Thyroid gland (tissue), 4 donors: ENCODE measurements at regions of chr15 and their contacts with region 1.

Region 1: DNA sequence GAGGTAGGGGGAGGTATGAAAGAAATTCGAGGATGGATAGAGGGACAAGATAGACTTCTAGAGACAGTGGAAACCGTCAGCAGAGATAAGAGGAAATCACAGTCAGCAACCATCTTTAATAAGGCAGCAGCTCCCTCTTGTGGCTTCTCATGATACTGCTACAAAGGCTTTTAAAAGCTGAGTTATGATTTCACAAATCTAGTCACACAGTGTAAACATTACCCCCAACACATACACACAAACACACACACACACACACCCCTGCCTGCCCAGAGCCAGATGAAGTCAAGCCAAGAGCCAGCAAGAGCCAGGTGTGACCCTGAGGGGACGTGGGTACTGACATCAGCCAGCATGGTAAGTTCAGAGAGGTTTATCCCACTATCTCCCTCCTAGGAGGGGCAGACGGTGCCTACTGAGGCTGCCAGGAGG is 18.9 kb upstream of the TGM5 start:
- DNase-seq: peak; percentile 14 to 29
- H3K4me3 ChIP-seq: no peak overlapping the region
- H3K27ac ChIP-seq: no peak overlapping the region
- H3K4me1 ChIP-seq: no peaks in the 10 kb centered on the region
- H3K27me3 ChIP-seq: no peaks in the 10 kb centered on the region
- CTCF ChIP-seq: peak; percentile 45 to 95 (median 74)
- POLR2A ChIP-seq: no peak

Region 2: GRCh38 chr15:43225201-43225949 is 60.2 kb before region 1 on chr15:
- intact Hi-C with region 1: loop called (anchors 5 kb)
- DNase-seq: peak; percentile 27 to 32
- H3K4me3 ChIP-seq: no peak overlapping the region
- H3K27ac ChIP-seq: no peak overlapping the region
- H3K4me1 ChIP-seq: peaks cover 0 to 6% of the 10 kb centered on the region in 2 donors
- H3K27me3 ChIP-seq: no peaks in the 10 kb centered on the region
- CTCF ChIP-seq: peak in 5 of 6 experiments; percentile 36 to 72 (median 59)
- POLR2A ChIP-seq: no peak

Region 3: DNA sequence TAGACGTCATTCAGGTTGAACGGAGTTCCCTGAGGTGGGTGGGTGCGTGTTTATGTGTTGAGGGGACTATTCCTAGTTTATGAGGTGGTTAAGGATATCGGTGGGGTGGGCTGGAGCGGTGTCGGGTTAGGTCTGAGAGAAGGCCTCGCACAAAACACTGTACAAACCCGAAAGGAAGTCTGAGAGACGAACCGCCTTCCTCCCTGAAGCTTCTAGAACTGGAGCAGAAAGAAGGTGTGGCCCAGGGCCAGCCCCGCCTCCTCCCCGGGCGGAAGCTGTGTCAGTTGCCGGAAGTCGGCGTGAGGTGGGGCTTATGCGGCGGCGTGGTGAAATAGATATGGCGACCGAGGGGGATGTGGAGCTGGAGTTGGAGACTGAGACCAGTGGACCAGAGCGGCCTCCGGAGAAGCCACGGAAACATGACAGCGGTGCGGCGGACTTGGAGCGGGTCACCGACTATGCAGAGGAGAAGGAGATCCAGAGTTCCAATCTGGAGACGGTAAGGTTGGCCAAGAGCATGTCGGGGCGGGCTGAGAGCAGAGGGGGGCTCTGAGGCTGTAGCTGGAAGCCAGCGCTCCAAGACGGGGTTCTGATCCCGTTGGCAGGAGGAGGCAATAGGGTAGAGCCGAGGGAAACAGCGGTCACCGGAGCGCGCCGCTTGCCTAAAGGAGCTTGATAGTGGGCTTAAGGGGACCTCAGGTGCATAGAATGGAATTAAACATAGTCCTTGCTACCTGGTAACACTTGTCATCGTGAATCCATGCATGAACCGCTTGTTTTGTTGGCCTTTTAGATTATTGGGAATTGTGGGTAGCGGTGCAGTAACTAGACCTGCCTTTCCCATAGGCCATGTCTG is 514.9 kb after region 1 on chr15 and contains the start of gene HYPK:
- intact Hi-C with region 1: no loop called
- DNase-seq: peak; percentile 94
- H3K4me3 ChIP-seq: peak within 1 kb of the TSS; percentile 28 to 83 (median 72)
- H3K27ac ChIP-seq: peak within 1 kb of the TSS; percentile 89 to 100 (median 96)
- H3K4me1 ChIP-seq: peaks cover 20 to 34% of the 10 kb centered on the region in 2 donors
- H3K27me3 ChIP-seq: no peaks in the 10 kb centered on the region
- CTCF ChIP-seq: no peak
- POLR2A ChIP-seq: peak in 1 of 2 donors; percentile 88
- total RNA-seq, gene HYPK: 11.6 to 23.4 (median 12.5) TPM